Activated naive CD4-positive, alpha-beta T cell treated with anti-CD3 and anti-CD28 coated beads for 36 hours (primary cell): ENCODE measurements at regions of chr21 and their contacts with region 1.

Region 1: GRCh38 chr21:36589355-36589971 is 109.5 kb upstream of the SIM2 start:
- DNase-seq: peak; percentile 60
- H3K4me3 Mint-ChIP-seq: no peak overlapping the region
- H3K27ac Mint-ChIP-seq: no peak overlapping the region
- H3K4me1 Mint-ChIP-seq: no peaks in the 10 kb centered on the region
- H3K27me3 Mint-ChIP-seq: no peaks in the 10 kb centered on the region

Region 2: DNA sequence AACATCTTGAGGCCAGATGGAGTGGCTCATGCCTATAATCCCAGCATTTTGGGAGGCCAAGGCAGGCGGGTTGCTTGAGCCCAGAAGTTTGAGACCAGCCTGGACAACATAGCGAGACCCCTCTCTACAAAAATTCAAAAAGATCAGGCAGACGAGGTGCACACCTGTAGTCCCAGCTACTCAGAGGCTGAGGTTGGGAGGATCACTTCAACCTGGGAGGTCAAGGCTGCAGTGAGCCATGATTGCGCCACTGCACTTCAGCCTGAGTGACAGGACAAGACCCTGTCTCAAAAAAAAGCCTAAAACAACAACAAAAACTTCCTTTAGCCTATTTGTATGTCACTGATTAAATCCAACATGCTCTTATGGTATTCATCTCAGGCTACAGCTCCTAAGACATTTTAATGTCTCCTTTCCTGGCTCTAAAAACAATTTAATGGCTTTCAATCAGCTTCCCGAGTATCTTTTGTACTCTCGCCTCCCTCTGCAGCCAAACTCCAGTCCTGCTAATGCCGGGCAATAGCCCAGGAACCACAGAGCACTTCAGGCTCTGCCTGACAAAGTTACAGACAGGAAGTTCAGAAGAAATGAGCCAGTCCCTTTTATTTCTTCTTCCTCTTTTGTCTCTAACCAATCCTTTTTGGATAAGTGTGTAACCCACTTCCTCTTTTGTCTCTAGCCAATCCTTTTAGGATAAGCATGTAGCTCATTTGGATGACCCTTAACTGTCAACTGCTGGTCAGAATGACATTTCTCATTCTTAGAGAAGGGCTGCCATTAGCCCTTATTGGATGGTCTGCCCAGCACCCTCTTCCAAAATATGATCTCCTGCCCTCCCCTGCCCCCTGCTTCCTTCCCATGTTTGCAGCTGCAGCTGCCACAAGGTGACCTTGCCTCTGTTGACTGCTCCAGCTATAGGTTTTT is 439.4 kb before region 1 on chr21:
- CTCF ChIA-PET with region 1: no interaction called
- intact Hi-C with region 1: loop called (anchors 5 kb)
- DNase-seq: peak; percentile 17
- H3K4me3 Mint-ChIP-seq: no peak overlapping the region
- H3K27ac Mint-ChIP-seq: peak overlapping the region; percentile 59
- H3K4me1 Mint-ChIP-seq: peaks cover 30% of the 10 kb centered on the region
- H3K27me3 Mint-ChIP-seq: no peaks in the 10 kb centered on the region

Region 3: DNA sequence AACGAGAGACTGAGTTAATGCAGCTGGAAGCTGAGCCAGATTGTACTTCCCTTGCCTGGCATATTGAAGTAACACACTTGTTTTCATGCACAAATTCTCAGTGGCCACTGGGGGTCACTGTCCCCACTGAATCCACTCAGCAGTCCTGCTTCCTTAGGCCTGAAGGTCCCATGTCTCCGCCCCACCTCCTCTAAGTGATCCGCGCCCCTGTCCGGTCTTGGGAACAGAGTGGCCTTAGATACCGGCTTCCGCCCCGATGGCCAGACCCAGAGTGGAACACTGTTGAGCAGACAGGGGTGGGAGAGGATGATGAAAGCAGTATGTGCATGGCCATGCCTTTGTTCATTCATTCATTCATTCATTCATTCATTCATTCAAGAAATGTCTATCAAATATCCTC is 169.5 kb before region 1 on chr21:
- CTCF ChIA-PET with region 1: no interaction called
- intact Hi-C with region 1: loop called (anchors 5 kb)
- DNase-seq: peak; percentile 66
- H3K4me3 Mint-ChIP-seq: no peak overlapping the region
- H3K27ac Mint-ChIP-seq: no peak overlapping the region
- H3K4me1 Mint-ChIP-seq: no peaks in the 10 kb centered on the region
- H3K27me3 Mint-ChIP-seq: no peaks in the 10 kb centered on the region

Region 4: DNA sequence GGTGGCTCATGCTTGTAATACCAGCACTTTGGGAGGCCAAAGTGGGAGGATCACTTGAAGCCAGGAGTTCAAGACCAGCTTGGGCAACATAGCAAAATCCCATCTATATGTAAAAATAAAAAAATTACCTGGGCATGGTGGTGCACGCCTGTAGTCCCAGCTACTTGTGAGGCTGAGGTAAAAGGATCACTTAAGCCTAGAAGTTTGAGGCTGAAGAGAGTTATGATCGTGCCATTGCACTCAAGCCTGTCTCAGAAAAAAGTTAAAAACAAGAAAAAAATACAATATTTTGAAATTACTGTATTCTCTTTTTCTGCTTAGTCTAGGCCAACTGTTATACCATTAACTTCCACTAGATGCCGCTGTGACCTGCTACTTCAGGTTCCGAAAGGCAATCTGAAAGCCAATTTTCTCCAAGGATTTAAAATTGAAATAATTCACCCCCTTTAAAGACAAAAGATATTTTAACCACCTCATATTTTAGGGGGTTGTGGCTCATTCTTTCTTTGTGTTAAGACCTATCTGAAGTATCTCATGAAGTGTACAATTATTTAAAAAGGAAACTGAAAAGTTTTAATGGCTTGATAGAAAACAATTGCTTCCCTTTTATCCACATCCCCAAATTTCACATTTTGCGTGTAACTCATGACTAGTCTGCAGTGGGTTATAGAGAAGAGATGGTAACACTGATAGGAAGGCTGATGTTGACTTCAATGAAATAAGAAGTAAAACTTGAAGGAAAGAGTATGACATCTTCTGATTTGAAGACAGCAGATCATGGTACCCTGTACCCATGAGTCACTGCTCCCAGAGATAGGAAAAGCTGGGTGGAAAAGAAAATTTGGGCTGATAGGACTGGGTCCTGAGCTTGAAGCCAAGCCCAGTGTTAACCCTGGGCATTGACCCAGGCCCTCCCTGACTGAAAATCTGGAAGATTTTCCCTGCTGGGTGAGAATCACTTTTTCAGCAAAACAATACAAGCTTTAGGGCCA is 85.1 kb before region 1 on chr21:
- CTCF ChIA-PET with region 1: interaction called, 4 read pairs
- intact Hi-C with region 1: loop called (anchors 1 kb)
- DNase-seq: peak; percentile 63
- H3K4me3 Mint-ChIP-seq: no peak overlapping the region
- H3K27ac Mint-ChIP-seq: no peak overlapping the region
- H3K4me1 Mint-ChIP-seq: no peaks in the 10 kb centered on the region
- H3K27me3 Mint-ChIP-seq: no peaks in the 10 kb centered on the region

Region 5: DNA sequence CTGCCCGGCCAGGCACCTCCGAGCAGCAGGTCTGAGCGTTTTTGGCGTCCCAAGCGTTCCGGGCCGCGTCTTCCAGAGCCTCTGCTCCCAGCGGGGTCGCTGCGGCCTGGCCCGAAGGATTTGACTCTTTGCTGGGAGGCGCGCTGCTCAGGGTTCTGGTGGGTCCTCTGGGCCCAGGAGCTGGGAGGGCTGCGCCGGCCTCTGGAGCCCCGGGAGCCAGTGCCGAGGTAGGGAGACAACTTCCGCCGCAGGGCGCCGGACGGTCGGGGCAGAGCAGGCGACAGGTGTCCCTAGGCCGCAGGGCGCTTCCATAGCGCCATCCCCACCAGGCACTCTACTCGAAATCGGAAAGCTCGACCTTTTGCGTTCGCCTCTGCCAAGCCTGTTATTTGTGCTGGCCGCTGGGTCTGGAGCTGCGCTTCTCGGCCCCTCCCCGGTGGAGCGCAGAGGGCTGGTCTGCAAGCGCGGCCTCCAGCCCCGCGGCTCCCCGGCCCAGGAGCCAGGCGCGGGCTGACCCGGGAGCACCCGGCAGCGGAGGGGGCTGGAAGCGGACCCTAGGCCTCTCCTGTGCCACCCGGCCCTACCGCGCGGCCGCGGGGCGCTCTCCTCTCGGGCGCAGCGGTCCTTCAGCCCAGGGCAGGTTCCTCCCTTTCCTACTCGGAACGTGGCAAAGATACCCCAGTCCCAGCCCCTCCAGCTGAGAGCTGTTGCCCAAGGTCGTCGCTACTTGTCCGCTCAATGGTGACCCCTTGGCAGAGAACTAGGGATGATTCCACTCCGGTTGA is 111.7 kb after region 1 on chr21:
- CTCF ChIA-PET with region 1: no interaction called
- intact Hi-C with region 1: loop called (anchors 5 kb)
- DNase-seq: no peak
- H3K4me3 Mint-ChIP-seq: peak overlapping the region; percentile 69
- H3K27ac Mint-ChIP-seq: no peak overlapping the region
- H3K4me1 Mint-ChIP-seq: peaks cover 40% of the 10 kb centered on the region
- H3K27me3 Mint-ChIP-seq: peaks cover 74% of the 10 kb centered on the region

Region 6: GRCh38 chr21:36927719-36928117 is 338.3 kb after region 1 on chr21:
- CTCF ChIA-PET with region 1: interaction called, 3 read pairs
- intact Hi-C with region 1: loop called (anchors 1 kb)
- DNase-seq: peak; percentile 87
- H3K4me3 Mint-ChIP-seq: no peak overlapping the region
- H3K27ac Mint-ChIP-seq: no peak overlapping the region
- H3K4me1 Mint-ChIP-seq: peaks cover 8% of the 10 kb centered on the region
- H3K27me3 Mint-ChIP-seq: no peaks in the 10 kb centered on the region